ENCODE measurements at regions of chr1 and their contacts with region 1.

Region 1: DNA sequence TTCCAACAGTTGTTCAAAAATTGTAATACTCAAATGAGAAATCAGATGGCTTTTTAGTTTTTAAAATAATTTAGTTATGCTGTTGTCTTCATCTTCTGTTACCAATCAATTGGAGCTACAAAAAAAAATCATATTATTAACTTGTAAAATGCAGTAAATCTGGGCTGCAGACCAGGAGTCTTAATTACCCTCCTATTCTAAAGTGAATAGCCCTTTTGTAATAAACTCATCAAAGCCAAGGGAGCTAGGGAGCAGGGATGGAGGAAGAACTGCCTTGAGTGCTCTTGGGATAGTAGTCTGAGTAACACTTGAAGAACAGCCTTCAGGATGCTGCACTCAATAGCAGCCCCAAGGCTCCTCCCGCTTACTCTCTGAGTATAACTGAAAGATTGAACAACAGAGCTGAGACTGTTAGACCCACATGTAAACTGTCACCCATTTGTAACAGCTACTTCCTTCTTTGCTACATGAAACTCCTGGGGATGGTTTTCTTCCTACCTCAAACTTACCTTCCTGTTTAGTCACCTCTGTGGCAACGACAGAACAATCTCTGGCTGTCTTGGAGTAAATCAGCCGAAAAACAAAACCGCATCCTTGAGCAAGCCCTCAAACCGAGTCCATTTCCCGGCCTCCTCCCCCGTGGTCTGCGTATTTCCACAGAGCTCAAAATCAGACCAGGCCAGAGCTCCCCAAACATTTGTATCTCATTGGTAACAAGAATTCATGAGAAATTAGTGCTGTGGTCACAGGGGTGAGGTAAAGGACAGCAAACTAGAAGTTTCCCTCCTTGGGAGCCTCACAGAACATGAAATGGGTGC is 55.9 kb downstream of the CD58 start:
- DNase-seq: peak; percentile 88
- ATAC-seq: peak; percentile 88
- H3K4me3 ChIP-seq: no peak overlapping the region
- H3K27ac ChIP-seq: peak overlapping the region; percentile 85
- H3K4me1 ChIP-seq: peaks cover 52% of the 10 kb centered on the region
- H3K27me3 ChIP-seq: no peaks in the 10 kb centered on the region
- CTCF ChIP-seq: no peak
- EP300 ChIP-seq: peak in 1 of 2 experiments; percentile 57; a peak in 3 of 4 replicates
- POLR2A ChIP-seq: no peak
- RAD21 ChIP-seq: no peak; the same call in 1 of the 2 replicates

Region 2: GRCh38 chr1:116504308-116505156 is 10.4 kb before region 1 on chr1:
- CTCF ChIA-PET with region 1: interaction called, 16 read pairs
- POLR2A ChIA-PET with region 1: interaction called, 18 read pairs
- RAD21 ChIA-PET with region 1: interaction called, 43 read pairs
- SMC1A ChIA-PET with region 1: interaction called, 67 read pairs
- in situ Hi-C with region 1: no loop called
- intact Hi-C with region 1: no loop called
- DNase-seq: peak; percentile 91
- ATAC-seq: peak; percentile 90
- H3K4me3 ChIP-seq: no peak overlapping the region
- H3K27ac ChIP-seq: peak overlapping the region; percentile 84
- H3K4me1 ChIP-seq: peaks cover 54% of the 10 kb centered on the region
- H3K27me3 ChIP-seq: no peaks in the 10 kb centered on the region
- CTCF ChIP-seq: no peak
- EP300 ChIP-seq: peak; percentile 43 to 69; a peak in 1 of 4 replicates
- POLR2A ChIP-seq: no peak
- RAD21 ChIP-seq: 0 out of 2 replicates have a peak, but pooled peaks have one; percentile 19

Region 3: DNA sequence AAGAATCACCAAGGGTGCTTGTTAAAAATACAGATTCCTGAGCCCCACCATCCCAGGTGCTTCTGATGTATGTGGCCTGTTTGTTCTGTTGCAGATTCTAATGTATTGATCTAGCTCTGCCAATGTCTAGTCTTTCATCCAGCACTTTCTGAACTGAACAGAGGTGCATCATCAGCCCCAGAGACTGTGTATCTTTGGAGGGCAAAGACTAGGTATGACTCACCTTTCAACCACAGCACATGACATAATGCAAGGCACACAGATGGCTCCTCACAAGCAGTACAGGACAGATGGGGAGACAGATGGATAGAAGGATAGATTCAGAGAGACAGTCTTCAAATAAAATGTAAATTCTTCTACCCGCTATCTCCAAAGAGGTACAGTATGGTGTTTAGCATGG is 23.6 kb after region 1 on chr1:
- CTCF ChIA-PET with region 1: interaction called, 15 read pairs
- POLR2A ChIA-PET with region 1: interaction called, 41 read pairs
- RAD21 ChIA-PET with region 1: interaction called, 12 read pairs
- SMC1A ChIA-PET with region 1: interaction called, 33 read pairs
- in situ Hi-C with region 1: no loop called
- intact Hi-C with region 1: loop called (anchors 2 kb)
- DNase-seq: no peak
- ATAC-seq: peak; percentile 89
- H3K4me3 ChIP-seq: no peak overlapping the region
- H3K27ac ChIP-seq: peak overlapping the region; percentile 66
- H3K4me1 ChIP-seq: peaks cover 51% of the 10 kb centered on the region
- H3K27me3 ChIP-seq: no peaks in the 10 kb centered on the region
- CTCF ChIP-seq: no peak
- EP300 ChIP-seq: peak in 1 of 2 experiments; percentile 34; a peak in 1 of 4 replicates
- POLR2A ChIP-seq: no peak
- RAD21 ChIP-seq: no peak

Region 4: DNA sequence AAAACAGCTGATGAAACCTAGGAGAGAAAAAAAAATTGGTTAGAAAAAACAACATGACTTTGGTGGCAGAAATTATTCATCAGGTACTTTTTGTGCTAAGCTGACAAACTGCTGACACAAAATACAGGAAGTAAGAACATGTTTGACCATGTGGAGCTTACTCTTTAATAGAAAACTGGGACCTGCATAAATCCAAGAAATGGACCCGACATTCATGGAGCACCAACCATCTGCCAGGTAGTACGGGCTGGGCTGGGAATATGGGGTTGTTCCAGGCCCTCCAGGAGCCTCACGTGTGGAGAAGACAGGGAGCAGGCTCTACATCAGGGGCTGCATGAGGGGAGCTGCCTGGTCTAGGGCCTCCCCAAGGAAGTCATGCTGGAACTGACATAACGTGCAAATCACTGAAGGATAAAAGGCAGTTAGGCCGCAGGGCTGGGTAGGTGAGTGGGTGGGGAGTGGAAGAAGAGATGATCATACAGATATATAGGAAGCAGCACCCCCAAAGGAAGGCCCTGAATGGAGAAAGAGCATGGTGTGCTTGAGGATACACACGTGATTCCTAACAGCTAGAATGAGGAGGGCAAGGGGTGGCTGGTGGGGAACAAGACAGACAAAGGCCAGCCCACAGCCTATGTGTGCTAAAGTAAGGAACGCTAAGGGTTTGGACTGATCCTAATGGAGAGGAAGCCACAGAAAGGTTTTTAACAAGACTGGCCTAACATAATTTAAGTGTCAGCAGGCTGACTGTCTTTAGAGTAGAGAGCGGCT is 29.9 kb after region 1 on chr1:
- CTCF ChIA-PET with region 1: interaction called, 15 read pairs
- POLR2A ChIA-PET with region 1: interaction called, 41 read pairs
- RAD21 ChIA-PET with region 1: interaction called, 12 read pairs
- SMC1A ChIA-PET with region 1: interaction called, 33 read pairs
- in situ Hi-C with region 1: no loop called
- intact Hi-C with region 1: loop called (anchors 2 kb)
- DNase-seq: no peak
- ATAC-seq: peak; percentile 64
- H3K4me3 ChIP-seq: peak overlapping the region; percentile 34
- H3K27ac ChIP-seq: peak overlapping the region; percentile 98
- H3K4me1 ChIP-seq: peaks cover 70% of the 10 kb centered on the region
- H3K27me3 ChIP-seq: no peaks in the 10 kb centered on the region
- CTCF ChIP-seq: no peak
- EP300 ChIP-seq: peak; percentile 73 to 83; a peak in 3 of 4 replicates
- POLR2A ChIP-seq: peak; percentile 50; the same call in 1 of the 2 replicates
- RAD21 ChIP-seq: no peak

Measured in GM12878 (cell line).